B cell (primary cell): ENCODE measurements at regions of chr3 and their contacts with region 1.

Region 1: DNA sequence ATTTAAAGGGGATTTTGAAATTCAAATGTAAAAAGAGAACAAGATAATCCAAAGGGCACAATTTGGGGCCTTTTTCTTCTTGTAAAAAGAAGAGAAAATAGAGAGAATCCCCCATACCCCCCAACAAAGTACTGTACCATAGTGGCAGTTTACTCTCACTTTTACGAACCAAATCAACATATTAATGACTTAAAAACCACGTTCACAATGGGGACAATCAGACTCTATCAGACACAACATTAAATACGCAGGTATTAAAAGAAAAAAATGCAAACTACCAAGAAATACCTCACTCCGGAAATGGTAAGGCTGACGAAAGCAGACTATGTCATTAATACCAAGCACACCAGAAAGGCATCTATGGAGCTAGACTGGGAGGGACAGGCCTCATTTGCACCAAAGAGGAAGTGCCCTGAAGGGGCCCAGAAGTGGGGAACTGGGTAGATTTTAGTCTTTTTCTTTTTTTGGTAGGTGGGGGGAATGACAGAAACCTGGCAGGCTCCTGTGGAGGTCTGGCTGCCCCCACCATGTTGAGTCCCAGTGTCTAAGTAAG is 134.3 kb downstream of the TIGIT start:
- DNase-seq: peak; percentile 83
- ATAC-seq: peak; percentile 90
- H3K4me3 ChIP-seq: peak overlapping the region in 1 of 5 experiments; percentile 4
- H3K4me3 Mint-ChIP-seq: peak overlapping the region; percentile 87
- H3K27ac ChIP-seq: peak overlapping the region; percentile 80 to 88
- H3K27ac Mint-ChIP-seq: peak overlapping the region; percentile 99
- H3K4me1 ChIP-seq: peaks cover 4 to 17% of the 10 kb centered on the region in 2 donors
- H3K4me1 Mint-ChIP-seq: peaks cover 48% of the 10 kb centered on the region
- H3K27me3 ChIP-seq: no peaks in the 10 kb centered on the region
- H3K27me3 Mint-ChIP-seq: no peaks in the 10 kb centered on the region
- CTCF ChIP-seq: no peak

Region 2: GRCh38 chr3:114034787-114035545 is 393.2 kb before region 1 on chr3:
- CTCF ChIA-PET with region 1: no interaction called
- POLR2A ChIA-PET with region 1: no interaction called
- intact Hi-C with region 1: no loop called
- DNase-seq: no peak
- ATAC-seq: no peak
- H3K4me3 ChIP-seq: no peak overlapping the region
- H3K4me3 Mint-ChIP-seq: no peak overlapping the region
- H3K27ac ChIP-seq: no peak overlapping the region
- H3K27ac Mint-ChIP-seq: no peak overlapping the region
- H3K4me1 ChIP-seq: no peaks in the 10 kb centered on the region
- H3K4me1 Mint-ChIP-seq: no peaks in the 10 kb centered on the region
- H3K27me3 ChIP-seq: no peaks in the 10 kb centered on the region
- H3K27me3 Mint-ChIP-seq: no peaks in the 10 kb centered on the region
- CTCF ChIP-seq: no peak

Region 3: GRCh38 chr3:114510201-114510600 is 82.1 kb after region 1 on chr3:
- CTCF ChIA-PET with region 1: interaction called, 4 read pairs
- POLR2A ChIA-PET with region 1: no interaction called
- intact Hi-C with region 1: loop called (anchors 5 kb)
- DNase-seq: no peak
- ATAC-seq: peak; percentile 56
- H3K4me3 ChIP-seq: no peak overlapping the region
- H3K4me3 Mint-ChIP-seq: no peak overlapping the region
- H3K27ac ChIP-seq: no peak overlapping the region
- H3K27ac Mint-ChIP-seq: no peak overlapping the region
- H3K4me1 ChIP-seq: peaks cover 9% of the 10 kb centered on the region in 2 donors
- H3K4me1 Mint-ChIP-seq: peaks cover 23% of the 10 kb centered on the region
- H3K27me3 ChIP-seq: no peaks in the 10 kb centered on the region
- H3K27me3 Mint-ChIP-seq: no peaks in the 10 kb centered on the region
- CTCF ChIP-seq: no peak

Region 4: GRCh38 chr3:114764056-114764492 is 336.0 kb after region 1 on chr3:
- CTCF ChIA-PET with region 1: no interaction called
- POLR2A ChIA-PET with region 1: no interaction called
- intact Hi-C with region 1: no loop called
- DNase-seq: no peak
- ATAC-seq: no peak
- H3K4me3 ChIP-seq: no peak overlapping the region
- H3K4me3 Mint-ChIP-seq: no peak overlapping the region
- H3K27ac ChIP-seq: no peak overlapping the region
- H3K27ac Mint-ChIP-seq: no peak overlapping the region
- H3K4me1 ChIP-seq: no peaks in the 10 kb centered on the region
- H3K4me1 Mint-ChIP-seq: peaks cover 6% of the 10 kb centered on the region
- H3K27me3 ChIP-seq: no peaks in the 10 kb centered on the region
- H3K27me3 Mint-ChIP-seq: no peaks in the 10 kb centered on the region
- CTCF ChIP-seq: no peak